ENCODE measurements at regions of chr11 and their contacts with region 1.

Region 1: DNA sequence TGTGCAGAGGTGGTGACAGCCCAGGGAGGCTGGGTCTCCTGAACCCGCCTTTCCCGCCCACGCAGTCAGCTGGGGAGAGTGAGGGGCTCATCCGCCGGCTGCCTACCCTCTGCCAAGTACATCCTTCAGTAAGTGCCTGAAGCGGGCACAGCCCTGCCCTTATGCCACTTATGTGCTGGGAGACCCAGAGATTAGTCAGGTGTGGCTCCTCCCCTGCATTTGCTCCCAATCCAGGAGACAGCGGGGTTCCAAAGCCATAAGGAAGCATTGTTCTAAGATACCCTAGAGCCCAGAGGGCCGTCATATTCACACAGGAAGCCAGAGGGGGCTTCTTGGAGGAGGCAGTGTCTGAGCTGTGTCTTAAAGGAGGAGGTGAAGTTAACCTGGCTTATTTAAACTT is 5.8 kb upstream of the PPP6R3 start:
- H3K4me3 Mint-ChIP-seq: no peak overlapping the region
- H3K27ac Mint-ChIP-seq: no peak overlapping the region
- H3K4me1 Mint-ChIP-seq: peaks cover 9% of the 10 kb centered on the region
- H3K27me3 Mint-ChIP-seq: peaks cover 12% of the 10 kb centered on the region

Region 2: GRCh38 chr11:67640021-67640757 is 814.6 kb before region 1 on chr11:
- intact Hi-C with region 1: no loop called
- H3K4me3 Mint-ChIP-seq: no peak overlapping the region
- H3K27ac Mint-ChIP-seq: no peak overlapping the region
- H3K4me1 Mint-ChIP-seq: peaks cover 14% of the 10 kb centered on the region
- H3K27me3 Mint-ChIP-seq: peaks cover 18% of the 10 kb centered on the region

Region 3: DNA sequence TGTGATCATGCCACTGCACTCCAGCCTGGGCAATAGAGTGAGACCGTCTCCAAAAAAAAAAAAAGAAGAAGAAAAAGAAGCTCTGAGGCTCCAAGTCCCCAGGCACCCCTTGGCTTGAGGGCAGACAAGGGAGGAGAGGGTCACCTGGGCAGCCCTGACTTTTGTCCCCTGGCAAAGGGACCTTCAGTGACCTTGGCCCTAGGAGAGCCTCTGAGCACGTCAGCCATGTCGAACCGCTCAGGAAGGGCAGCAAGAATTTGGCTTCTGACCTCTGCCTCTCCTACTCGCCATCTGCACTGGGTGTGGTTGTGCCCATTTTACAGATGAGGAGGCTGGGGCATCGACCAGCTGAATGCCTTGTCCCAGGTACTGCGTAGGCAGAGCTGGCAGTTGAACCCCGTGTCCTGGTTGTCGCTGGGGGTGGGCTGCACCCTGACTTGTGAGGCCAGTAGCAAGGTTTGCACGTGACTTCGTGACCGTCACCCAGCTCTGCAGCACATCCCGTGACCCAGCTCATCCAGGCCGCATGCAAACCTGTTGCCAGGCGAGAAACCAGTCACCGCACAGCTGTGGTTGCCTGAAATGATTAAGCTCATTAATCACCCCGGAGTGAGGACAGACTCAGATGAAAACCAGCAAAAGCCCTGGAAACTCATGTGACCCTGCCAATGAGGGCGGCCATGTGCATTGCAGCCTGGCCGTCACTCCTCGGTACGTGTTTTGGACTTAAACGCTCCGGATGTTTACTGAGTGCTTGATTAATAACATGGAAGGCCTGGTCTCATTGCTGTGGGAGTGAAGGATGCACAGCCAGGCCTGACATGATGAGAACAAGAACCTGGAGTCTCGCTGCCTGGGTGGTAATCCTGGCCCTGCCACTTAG is 41.9 kb before region 1 on chr11:
- intact Hi-C with region 1: no loop called
- H3K4me3 Mint-ChIP-seq: no peak overlapping the region
- H3K27ac Mint-ChIP-seq: no peak overlapping the region
- H3K4me1 Mint-ChIP-seq: peaks cover 6% of the 10 kb centered on the region
- H3K27me3 Mint-ChIP-seq: no peaks in the 10 kb centered on the region

Region 4: DNA sequence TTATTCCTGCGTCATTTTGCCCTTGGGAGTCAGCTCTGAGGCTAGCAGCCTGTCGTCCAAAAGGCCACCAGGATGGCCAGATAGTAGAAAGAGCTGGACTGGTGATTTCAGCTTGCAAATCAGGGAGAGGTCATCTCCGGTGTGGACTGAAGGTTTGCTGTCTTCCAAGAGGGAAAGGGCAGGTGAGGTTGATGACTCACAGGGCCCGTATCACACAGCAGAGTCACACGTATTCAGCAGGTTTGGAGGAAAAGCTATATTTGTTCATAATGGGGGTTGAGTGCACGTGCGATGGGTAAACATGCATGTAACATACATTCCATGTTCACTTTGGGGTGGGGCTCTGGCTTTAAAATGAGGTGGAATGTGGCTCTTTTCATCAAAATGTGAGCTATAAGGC is 423.3 kb after region 1 on chr11:
- intact Hi-C with region 1: loop called (anchors 5 kb)
- H3K4me3 Mint-ChIP-seq: no peak overlapping the region
- H3K27ac Mint-ChIP-seq: no peak overlapping the region
- H3K4me1 Mint-ChIP-seq: no peaks in the 10 kb centered on the region
- H3K27me3 Mint-ChIP-seq: no peaks in the 10 kb centered on the region